ENCODE measurements at regions of chr15 and their contacts with region 1.

Region 1: GRCh38 chr15:24878153-24878552 is 76.6 kb upstream of the SNRPN start:
- DNase-seq: peak; percentile 57
- ATAC-seq: peak; percentile 89

Region 2: GRCh38 chr15:23823508-23823907 is 1054.6 kb before region 1 on chr15:
- intact Hi-C with region 1: no loop called
- DNase-seq: no peak
- ATAC-seq: no peak

Region 3: GRCh38 chr15:24784506-24784905 is 93.6 kb before region 1 on chr15:
- intact Hi-C with region 1: loop called (anchors 5 kb)
- DNase-seq: no peak
- ATAC-seq: no peak

Region 4: GRCh38 chr15:25087137-25087536 is 209.0 kb after region 1 on chr15:
- intact Hi-C with region 1: no loop called
- DNase-seq: no peak
- ATAC-seq: no peak

Measured in left ventricle myocardium superior (tissue), 1 donor.